ENCODE measurements at regions of chr1 and their contacts with region 1.

Region 1: GRCh38 chr1:64038965-64039926 is 164.2 kb upstream of the UBE2U start:
- DNase-seq: peak in 3 of 5 donors; percentile 31 to 37 (median 33)
- ATAC-seq: peak; percentile 46 to 78 (median 70)
- H3K4me3 ChIP-seq: no peak overlapping the region
- H3K27ac ChIP-seq: peak overlapping the region in 11 of 12 donors; percentile 8 to 88 (median 78)
- H3K4me1 ChIP-seq: peaks cover 0 to 57% (median 24%) of the 10 kb centered on the region in 12 donors
- H3K27me3 ChIP-seq: no peaks in the 10 kb centered on the region
- CTCF ChIP-seq: no peak
- POLR2A ChIP-seq: no peak

Region 2: GRCh38 chr1:63917571-63918417 is 121.5 kb before region 1 on chr1:
- intact Hi-C with region 1: loop called in 2 of 10 experiments (anchors 5 to 10 kb)
- DNase-seq: no peak
- ATAC-seq: no peak
- H3K4me3 ChIP-seq: no peak overlapping the region
- H3K27ac ChIP-seq: no peak overlapping the region
- H3K4me1 ChIP-seq: peaks cover 0 to 72% (median 19%) of the 10 kb centered on the region in 12 donors
- H3K27me3 ChIP-seq: no peaks in the 10 kb centered on the region
- CTCF ChIP-seq: peak in 3 of 12 donors; percentile 17 to 25 (median 18)
- POLR2A ChIP-seq: no peak

Region 3: DNA sequence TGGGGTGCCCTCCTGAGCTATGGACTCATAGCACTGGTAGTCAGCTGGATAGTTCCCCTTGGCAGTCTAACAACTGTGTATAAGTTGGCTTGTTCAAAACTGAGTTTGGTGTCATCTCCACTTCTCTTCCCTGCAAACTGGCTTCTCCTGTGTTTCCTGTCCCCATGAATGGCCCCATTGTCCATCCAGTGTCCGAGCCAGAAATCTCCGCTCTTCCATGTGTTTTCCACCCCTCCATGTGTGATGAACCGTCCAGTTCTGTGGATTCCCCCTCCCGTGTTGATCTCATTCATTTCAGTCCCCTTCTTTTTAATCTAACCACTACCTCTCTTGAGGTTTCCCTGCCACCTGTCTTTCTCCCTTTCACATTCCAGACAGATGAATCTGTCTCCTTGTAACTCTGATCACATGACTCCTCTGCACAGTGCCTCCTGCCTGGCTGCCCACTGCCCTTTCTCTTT is 69.8 kb before region 1 on chr1:
- intact Hi-C with region 1: loop called in 2 of 10 experiments (anchors 5 to 10 kb)
- DNase-seq: no peak
- ATAC-seq: peak in 2 of 4 donors; percentile 10 to 17
- H3K4me3 ChIP-seq: no peak overlapping the region
- H3K27ac ChIP-seq: peak overlapping the region in 6 of 12 donors; percentile 19 to 69 (median 56)
- H3K4me1 ChIP-seq: peaks cover 0 to 40% (median 10%) of the 10 kb centered on the region in 12 donors
- H3K27me3 ChIP-seq: no peaks in the 10 kb centered on the region
- CTCF ChIP-seq: no peak
- POLR2A ChIP-seq: no peak

Region 4: GRCh38 chr1:63975481-63975880 is 63.8 kb before region 1 on chr1:
- intact Hi-C with region 1: loop called in 1 of 10 experiments (anchors 10 kb)
- DNase-seq: no peak
- ATAC-seq: no peak
- H3K4me3 ChIP-seq: no peak overlapping the region
- H3K27ac ChIP-seq: no peak overlapping the region
- H3K4me1 ChIP-seq: peaks cover 0 to 22% (median 0%) of the 10 kb centered on the region in 12 donors
- H3K27me3 ChIP-seq: no peaks in the 10 kb centered on the region
- CTCF ChIP-seq: no peak
- POLR2A ChIP-seq: no peak

Region 5: GRCh38 chr1:64051796-64052195 is 12.6 kb after region 1 on chr1:
- intact Hi-C with region 1: loop called in 1 of 10 experiments (anchors 1 kb)
- DNase-seq: no peak
- ATAC-seq: peak in 3 of 4 donors; percentile 59 to 71 (median 68)
- H3K4me3 ChIP-seq: no peak overlapping the region
- H3K27ac ChIP-seq: peak overlapping the region in 8 of 12 donors; percentile 1 to 70 (median 30)
- H3K4me1 ChIP-seq: peaks cover 0 to 33% (median 5%) of the 10 kb centered on the region in 12 donors
- H3K27me3 ChIP-seq: no peaks in the 10 kb centered on the region
- CTCF ChIP-seq: no peak
- POLR2A ChIP-seq: no peak

Measured in heart left ventricle (tissue), 16 donors.